ENCODE measurements at regions of chr13 and their contacts with region 1.

Region 1: GRCh38 chr13:104773775-104774174 is 1707.6 kb upstream of the SLC10A2 start:
- DNase-seq: no peak
- CTCF ChIP-seq: peak; percentile 51

Region 2: GRCh38 chr13:104757712-104758111 is 16.1 kb before region 1 on chr13:
- CTCF ChIA-PET with region 1: interaction called, 12 read pairs
- POLR2A ChIA-PET with region 1: no interaction called
- DNase-seq: no peak
- CTCF ChIP-seq: no peak

Region 3: DNA sequence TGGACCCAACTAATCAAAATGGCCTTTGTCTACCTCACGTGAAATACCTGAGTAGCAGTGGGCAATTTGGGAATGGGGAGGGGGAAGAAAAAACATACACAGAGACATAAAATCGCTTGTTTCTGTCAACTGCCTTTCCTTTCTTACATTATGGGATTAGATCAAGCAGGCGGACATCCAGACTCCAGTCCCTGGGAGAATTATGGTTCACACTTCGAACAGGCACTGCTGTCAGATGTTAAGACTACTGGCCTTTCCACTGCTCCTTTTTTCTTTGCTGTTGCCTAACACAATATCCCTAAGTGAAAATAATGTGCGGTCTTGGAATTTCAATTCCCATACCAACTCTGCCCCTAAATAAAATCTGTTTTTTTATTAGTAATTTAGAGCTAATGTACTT is 12.2 kb after region 1 on chr13:
- CTCF ChIA-PET with region 1: interaction called, 12 read pairs
- POLR2A ChIA-PET with region 1: no interaction called
- DNase-seq: no peak
- CTCF ChIP-seq: no peak